ENCODE measurements at regions of chr2 and their contacts with region 1.

Region 1: DNA sequence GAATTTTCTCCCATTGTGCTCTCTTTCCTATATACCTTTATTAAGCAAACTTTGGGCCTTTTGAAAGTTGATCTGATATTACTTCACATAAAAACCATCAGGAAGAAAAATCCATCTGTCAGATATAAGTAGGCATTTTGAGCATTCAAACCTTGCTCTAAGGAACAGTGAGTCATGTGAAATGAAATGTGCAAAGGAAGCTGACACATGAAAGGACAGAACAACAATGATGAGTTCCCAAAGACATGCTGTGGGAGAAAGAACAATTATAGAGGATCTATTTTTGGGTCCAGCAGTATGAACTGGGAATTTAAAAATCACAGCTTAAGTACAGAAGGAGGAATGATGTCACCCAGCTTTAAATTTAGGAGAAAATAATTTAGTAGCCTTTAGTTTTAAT is 18.1 kb downstream of the CALCRL start:
- DNase-seq: peak; percentile 44

Region 2: GRCh38 chr2:187302619-187303018 is 127.4 kb before region 1 on chr2:
- in situ Hi-C with region 1: loop called (anchors 25 kb)
- DNase-seq: no peak

Region 3: GRCh38 chr2:187719510-187719909 is 289.5 kb after region 1 on chr2:
- in situ Hi-C with region 1: no loop called
- DNase-seq: no peak